Posterior vena cava (tissue), 2 donors: ENCODE measurements at regions of chrX and their contacts with region 1.

Region 1: DNA sequence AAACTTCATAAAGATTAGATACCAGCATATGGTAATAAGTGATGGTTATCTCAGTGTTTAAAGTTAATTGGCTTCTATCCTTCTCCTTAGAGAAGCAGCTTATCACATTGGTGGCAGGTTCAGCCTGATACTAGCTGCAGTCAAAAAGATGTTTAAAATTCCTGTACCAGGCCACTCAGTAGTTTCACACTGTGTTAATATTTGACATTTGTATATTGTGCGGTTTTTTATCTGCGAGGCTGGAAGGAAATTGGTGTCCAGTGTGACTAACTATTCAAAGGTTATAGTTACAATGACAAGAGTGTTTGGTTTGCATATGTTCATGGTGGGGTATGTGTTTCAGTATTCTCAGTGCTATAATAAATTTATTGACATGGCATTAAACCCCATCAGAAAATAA is 27.5 kb upstream of the TBC1D8B start:
- DNase-seq: no peak

Region 2: GRCh38 chrX:105515561-105515960 is 1259.4 kb before region 1 on chrX:
- intact Hi-C with region 1: no loop called
- DNase-seq: no peak

Region 3: DNA sequence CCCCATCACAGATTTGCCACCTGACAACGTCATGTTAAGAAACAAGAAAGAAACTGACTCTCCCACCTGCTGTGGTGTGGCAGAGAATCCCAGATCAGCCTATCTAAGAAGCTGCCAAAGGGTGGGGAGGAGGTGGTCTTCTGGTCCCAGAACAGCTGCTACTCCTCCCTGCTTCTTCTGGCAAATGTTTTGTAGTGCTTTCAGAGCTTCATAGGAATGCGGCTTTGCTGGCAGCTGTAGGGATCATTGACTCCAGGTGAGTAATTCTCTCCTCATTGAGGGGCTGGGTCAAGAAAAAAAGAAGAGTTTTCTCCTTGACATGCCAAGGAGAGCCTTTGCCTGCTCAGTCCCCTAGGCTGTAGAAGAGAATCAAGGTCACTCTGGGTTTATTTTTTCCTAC is 929.4 kb before region 1 on chrX:
- intact Hi-C with region 1: no loop called
- DNase-seq: no peak

Region 4: GRCh38 chrX:107562482-107562881 is 787.5 kb after region 1 on chrX:
- intact Hi-C with region 1: loop called in 1 of 2 experiments (anchors 5 kb)
- DNase-seq: no peak